Activated CD4-positive, alpha-beta memory T cell treated with anti-CD3 and anti-CD28 coated beads, Interleukin-2, amount 10 ng/mL, durations not matched to agents 7 days and 5 days (primary cell): ENCODE measurements at regions of chr4 and their contacts with region 1.

Region 1: GRCh38 chr4:142379277-142380057 is 466.6 kb downstream of the INPP4B start:
- DNase-seq: no peak
- H3K4me3 Mint-ChIP-seq: no peak overlapping the region
- H3K27ac Mint-ChIP-seq: peak overlapping the region; percentile 9
- H3K4me1 Mint-ChIP-seq: peaks cover 66% of the 10 kb centered on the region
- H3K27me3 Mint-ChIP-seq: no peaks in the 10 kb centered on the region

Region 2: GRCh38 chr4:142396279-142396678 is 16.8 kb after region 1 on chr4:
- CTCF ChIA-PET with region 1: interaction called, 3 read pairs
- POLR2A ChIA-PET with region 1: interaction called, 20 read pairs
- DNase-seq: no peak
- H3K4me3 Mint-ChIP-seq: peak overlapping the region; percentile 69
- H3K27ac Mint-ChIP-seq: peak overlapping the region; percentile 70
- H3K4me1 Mint-ChIP-seq: peaks cover 75% of the 10 kb centered on the region
- H3K27me3 Mint-ChIP-seq: no peaks in the 10 kb centered on the region

Region 3: DNA sequence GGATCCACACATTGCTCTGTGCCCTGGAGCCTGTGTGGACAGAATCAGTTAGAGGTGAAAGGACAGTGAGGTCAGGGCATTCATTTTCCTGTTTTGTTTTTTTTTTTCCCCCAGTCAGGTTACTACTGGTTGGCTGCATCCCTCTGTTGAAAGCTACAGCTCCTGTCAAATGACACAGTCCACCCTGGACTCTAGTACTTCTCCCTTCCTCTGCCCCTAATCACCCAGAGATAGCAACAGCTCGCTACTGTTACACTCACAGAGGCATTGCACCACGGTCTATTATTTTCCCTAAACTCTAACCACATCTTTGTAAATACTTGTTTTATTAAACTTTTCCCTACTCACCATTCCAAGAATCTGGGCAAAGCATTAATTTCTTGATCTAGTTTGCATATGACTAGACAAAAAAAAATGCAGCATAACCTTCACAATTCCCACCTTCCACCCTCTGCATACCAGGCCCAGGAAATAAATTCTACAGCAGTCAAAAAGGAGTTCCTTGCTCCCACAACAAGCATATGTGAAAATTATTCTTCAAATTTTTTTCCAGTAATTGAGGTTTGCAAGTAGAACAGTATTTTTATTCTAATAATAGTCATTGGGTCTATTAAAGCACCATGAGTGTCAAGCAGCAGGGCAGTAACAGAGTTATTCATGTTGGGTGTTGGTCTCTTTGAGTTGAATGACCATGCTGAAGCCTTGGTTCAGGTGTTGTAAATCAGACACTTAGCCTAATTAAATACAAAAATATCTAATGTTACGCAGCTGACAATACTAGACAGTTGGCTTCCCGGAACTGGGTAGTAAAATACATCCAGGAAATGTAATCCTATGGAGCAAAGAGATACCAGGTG is 137.4 kb after region 1 on chr4:
- CTCF ChIA-PET with region 1: no interaction called
- POLR2A ChIA-PET with region 1: no interaction called
- DNase-seq: no peak
- H3K4me3 Mint-ChIP-seq: no peak overlapping the region
- H3K27ac Mint-ChIP-seq: no peak overlapping the region
- H3K4me1 Mint-ChIP-seq: no peaks in the 10 kb centered on the region
- H3K27me3 Mint-ChIP-seq: no peaks in the 10 kb centered on the region